ENCODE measurements at regions of chr11 and their contacts with region 1.

Region 1: GRCh38 chr11:75867775-75868374 is 52.9 kb downstream of the UVRAG start:
- DNase-seq: no peak
- H3K4me3 ChIP-seq: no peak overlapping the region
- H3K27ac ChIP-seq: no peak overlapping the region
- H3K4me1 ChIP-seq: peaks cover 0 to 23% (median 0%) of the 10 kb centered on the region in 3 donors
- H3K27me3 ChIP-seq: no peaks in the 10 kb centered on the region
- CTCF ChIP-seq: peak; percentile 65 to 85 (median 76)
- POLR2A ChIP-seq: no peak

Region 2: GRCh38 chr11:75802913-75803820 is 64.7 kb before region 1 on chr11:
- intact Hi-C with region 1: loop called (anchors 5 kb)
- DNase-seq: no peak
- H3K4me3 ChIP-seq: no peak overlapping the region
- H3K27ac ChIP-seq: no peak overlapping the region
- H3K4me1 ChIP-seq: peaks cover 5 to 16% (median 5%) of the 10 kb centered on the region in 3 donors
- H3K27me3 ChIP-seq: no peaks in the 10 kb centered on the region
- CTCF ChIP-seq: peak; percentile 80 to 94 (median 88)
- POLR2A ChIP-seq: no peak